ENCODE measurements at regions of chr6 and their contacts with region 1.

Region 1: DNA sequence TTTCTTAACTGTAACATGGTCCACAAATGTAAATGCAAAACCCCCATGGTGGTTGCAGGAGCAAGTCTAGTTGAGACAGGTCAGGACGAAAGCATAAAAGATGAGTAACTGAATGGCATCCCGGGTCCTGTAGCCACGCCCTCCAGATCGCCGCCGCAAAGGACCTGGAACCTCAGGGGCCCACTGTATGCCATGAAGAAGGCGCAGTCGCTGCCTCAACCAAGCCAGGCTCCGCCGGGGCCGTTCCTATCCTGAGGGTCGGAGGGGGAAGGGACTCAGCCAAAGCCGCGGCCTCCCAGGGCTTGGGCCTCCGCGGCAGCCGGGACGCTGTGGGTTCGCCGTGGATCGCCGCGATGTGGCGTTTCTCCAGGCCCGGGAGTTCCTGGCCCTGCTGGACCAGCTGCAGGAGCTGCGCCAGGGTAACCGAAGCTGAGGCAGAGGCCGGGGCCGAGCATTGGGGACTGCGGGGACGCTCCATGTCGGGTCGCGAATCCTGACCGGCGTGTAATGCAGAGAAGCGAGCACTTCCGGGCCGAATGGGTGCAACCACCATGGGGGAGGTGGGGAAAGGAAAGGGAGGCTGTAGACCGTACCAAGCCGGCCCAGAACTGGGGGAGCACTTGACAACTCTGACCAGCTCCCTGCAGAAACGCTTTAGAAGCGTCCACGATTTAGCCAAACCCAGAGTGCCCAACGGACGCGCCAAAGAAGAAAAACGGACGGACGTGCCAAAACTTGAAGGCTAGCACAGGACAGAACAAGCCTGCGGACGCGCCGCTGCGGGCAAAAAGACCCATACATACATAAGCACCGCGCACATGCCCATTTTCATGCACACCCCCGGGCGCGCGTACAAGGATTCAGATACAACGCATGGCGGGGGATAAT is 11.1 kb downstream of the RPL7L1 start:
- DNase-seq: peak; percentile 85 to 87 (median 87)
- H3K4me3 ChIP-seq: peak overlapping the region; percentile 91 to 98 (median 93)
- H3K4me3 Mint-ChIP-seq: peak overlapping the region; percentile 94 to 97
- H3K27ac ChIP-seq: peak overlapping the region; percentile 85 to 91
- H3K27ac Mint-ChIP-seq: peak overlapping the region; percentile 87 to 95 (median 93)
- H3K4me1 ChIP-seq: peaks cover 27 to 36% of the 10 kb centered on the region in 2 donors
- H3K4me1 Mint-ChIP-seq: peaks cover 30% of the 10 kb centered on the region
- H3K27me3 ChIP-seq: no peaks in the 10 kb centered on the region
- H3K27me3 Mint-ChIP-seq: no peaks in the 10 kb centered on the region
- CTCF ChIP-seq: no peak

Region 2: GRCh38 chr6:42217519-42218367 is 672.8 kb before region 1 on chr6 and contains the start of gene MRPS10:
- intact Hi-C with region 1: loop called in 1 of 2 experiments (anchors 5 kb)
- DNase-seq: peak; percentile 90 to 91 (median 90)
- H3K4me3 ChIP-seq: peak within 1 kb of the TSS; percentile 81 to 97 (median 95)
- H3K4me3 Mint-ChIP-seq: peak within 1 kb of the TSS; percentile 91 to 96
- H3K27ac ChIP-seq: peak within 1 kb of the TSS; percentile 64 to 86
- H3K27ac Mint-ChIP-seq: peak within 1 kb of the TSS; percentile 92 to 98 (median 96)
- H3K4me1 ChIP-seq: peaks cover 12% of the 10 kb centered on the region in 2 donors
- H3K4me1 Mint-ChIP-seq: peaks cover 13% of the 10 kb centered on the region
- H3K27me3 ChIP-seq: no peaks in the 10 kb centered on the region
- H3K27me3 Mint-ChIP-seq: no peaks in the 10 kb centered on the region
- CTCF ChIP-seq: no peak
- polyA plus RNA-seq, gene MRPS10: 9.2 to 33.0 (median 31.4) TPM

Region 3: GRCh38 chr6:42745707-42746462 is 144.7 kb before region 1 on chr6 and contains the start of gene TBCC:
- intact Hi-C with region 1: loop called in 1 of 2 experiments (anchors 10 kb)
- DNase-seq: peak; percentile 97
- H3K4me3 ChIP-seq: peak within 1 kb of the TSS; percentile 83 to 99 (median 97)
- H3K4me3 Mint-ChIP-seq: peak within 1 kb of the TSS; percentile 100
- H3K27ac ChIP-seq: peak within 1 kb of the TSS; percentile 79 to 97
- H3K27ac Mint-ChIP-seq: peak within 1 kb of the TSS; percentile 95 to 100 (median 100)
- H3K4me1 ChIP-seq: peaks cover 18 to 30% of the 10 kb centered on the region in 2 donors
- H3K4me1 Mint-ChIP-seq: peaks cover 35% of the 10 kb centered on the region
- H3K27me3 ChIP-seq: no peaks in the 10 kb centered on the region
- H3K27me3 Mint-ChIP-seq: no peaks in the 10 kb centered on the region
- CTCF ChIP-seq: no peak
- polyA plus RNA-seq, gene TBCC: 19.3 to 31.3 (median 30.7) TPM

Region 4: GRCh38 chr6:42879372-42880239 is 10.9 kb before region 1 on chr6 and contains the start of gene RPL7L1:
- intact Hi-C with region 1: loop called in 1 of 2 experiments (anchors 2 kb)
- DNase-seq: peak; percentile 76 to 87 (median 80)
- H3K4me3 ChIP-seq: peak within 1 kb of the TSS; percentile 53 to 98 (median 89)
- H3K4me3 Mint-ChIP-seq: peak within 1 kb of the TSS; percentile 98 to 99
- H3K27ac ChIP-seq: peak within 1 kb of the TSS; percentile 63 to 98
- H3K27ac Mint-ChIP-seq: peak within 1 kb of the TSS; percentile 98 to 100 (median 100)
- H3K4me1 ChIP-seq: peaks cover 14 to 19% of the 10 kb centered on the region in 2 donors
- H3K4me1 Mint-ChIP-seq: peaks cover 16% of the 10 kb centered on the region
- H3K27me3 ChIP-seq: no peaks in the 10 kb centered on the region
- H3K27me3 Mint-ChIP-seq: peaks cover 0 to 2% (median 0%) of the 10 kb centered on the region in 3 donors
- CTCF ChIP-seq: no peak
- polyA plus RNA-seq, gene RPL7L1: 7.6 to 35.5 (median 29.7) TPM

Region 5: GRCh38 chr6:42984001-42984923 is 93.7 kb after region 1 on chr6 and contains the start of gene PPP2R5D:
- intact Hi-C with region 1: no loop called
- DNase-seq: peak; percentile 96 to 99 (median 96)
- H3K4me3 ChIP-seq: peak within 1 kb of the TSS; percentile 64 to 91 (median 64)
- H3K4me3 Mint-ChIP-seq: peak within 1 kb of the TSS; percentile 85 to 96
- H3K27ac ChIP-seq: peak within 1 kb of the TSS; percentile 71 to 84
- H3K27ac Mint-ChIP-seq: peak within 1 kb of the TSS; percentile 78 to 94 (median 91)
- H3K4me1 ChIP-seq: peaks cover 23 to 30% of the 10 kb centered on the region in 2 donors
- H3K4me1 Mint-ChIP-seq: peaks cover 53% of the 10 kb centered on the region
- H3K27me3 ChIP-seq: no peaks in the 10 kb centered on the region
- H3K27me3 Mint-ChIP-seq: peaks cover 0 to 4% (median 0%) of the 10 kb centered on the region in 3 donors
- CTCF ChIP-seq: no peak
- polyA plus RNA-seq, gene PPP2R5D: 10.3 to 24.9 (median 14.9) TPM

Measured in CD14-positive monocyte (primary cell).